ENCODE measurements at regions of chr14 and their contacts with region 1.

Region 1: GRCh38 chr14:51855234-51855633 is 5.2 kb upstream of the GNG2 start:
- DNase-seq: no peak

Region 2: GRCh38 chr14:51369814-51370213 is 485.4 kb before region 1 on chr14:
- intact Hi-C with region 1: loop called in 1 of 2 experiments (anchors 5 kb)
- DNase-seq: no peak

Measured in posterior vena cava (tissue), 2 donors.